Activated CD8-positive, alpha-beta T cell treated with anti-CD3 and anti-CD28 coated beads for 36 hours (primary cell): ENCODE measurements at regions of chr7 and their contacts with region 1.

Region 1: GRCh38 chr7:150898475-150899011 is 46.2 kb downstream of the AOC1 start:
- DNase-seq: peak; percentile 85
- ATAC-seq: peak; percentile 89
- H3K4me3 Mint-ChIP-seq: no peak overlapping the region
- H3K27ac Mint-ChIP-seq: no peak overlapping the region
- H3K4me1 Mint-ChIP-seq: peaks cover 14% of the 10 kb centered on the region
- H3K27me3 Mint-ChIP-seq: peaks cover 58% of the 10 kb centered on the region
- CTCF ChIP-seq: peak; percentile 98

Region 2: DNA sequence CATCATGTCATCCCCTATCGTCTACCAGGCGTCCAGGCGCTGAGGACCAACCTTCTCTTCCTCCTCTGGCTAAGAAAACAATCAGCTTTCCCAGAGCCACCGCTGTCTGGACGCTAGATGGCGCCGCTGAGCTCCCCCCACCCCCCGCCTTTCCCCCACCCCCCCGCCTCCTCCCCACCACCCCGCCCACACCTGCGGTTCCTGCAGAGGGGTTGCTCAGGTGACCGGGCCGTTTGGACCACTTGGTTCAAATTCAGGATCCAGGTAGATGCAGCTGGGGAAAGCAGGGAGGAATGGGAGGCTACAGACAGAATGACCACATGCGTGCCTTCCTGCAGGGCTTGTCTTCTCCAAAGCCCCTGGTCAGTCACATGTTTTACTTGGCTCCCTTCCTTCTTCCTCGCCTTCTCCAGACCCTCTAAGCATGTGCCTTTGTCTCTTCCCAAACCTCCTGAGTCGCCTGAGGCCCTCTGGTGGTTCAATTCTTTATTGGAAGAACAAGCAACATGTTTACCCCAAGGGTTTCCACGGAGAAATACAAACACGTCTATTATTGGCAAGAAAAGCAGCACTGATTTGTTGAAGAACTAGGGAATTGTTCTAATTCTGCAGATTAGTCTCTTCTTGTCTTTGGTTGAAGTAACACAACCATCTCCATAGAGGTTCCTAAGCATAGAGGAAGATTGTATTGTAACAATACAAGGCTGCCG is 21.6 kb before region 1 on chr7:
- CTCF ChIA-PET with region 1: interaction called, 48 read pairs
- POLR2A ChIA-PET with region 1: interaction called, 3 read pairs
- intact Hi-C with region 1: no loop called
- DNase-seq: peak; percentile 41
- ATAC-seq: no peak
- H3K4me3 Mint-ChIP-seq: no peak overlapping the region
- H3K27ac Mint-ChIP-seq: no peak overlapping the region
- H3K4me1 Mint-ChIP-seq: peaks cover 14% of the 10 kb centered on the region
- H3K27me3 Mint-ChIP-seq: peaks cover 3% of the 10 kb centered on the region
- CTCF ChIP-seq: no peak

Region 3: GRCh38 chr7:150923196-150923595 is 24.7 kb after region 1 on chr7:
- CTCF ChIA-PET with region 1: interaction called, 32 read pairs
- POLR2A ChIA-PET with region 1: no interaction called
- intact Hi-C with region 1: no loop called
- DNase-seq: no peak
- ATAC-seq: no peak
- H3K4me3 Mint-ChIP-seq: no peak overlapping the region
- H3K27ac Mint-ChIP-seq: no peak overlapping the region
- H3K4me1 Mint-ChIP-seq: peaks cover 16% of the 10 kb centered on the region
- H3K27me3 Mint-ChIP-seq: peaks cover 16% of the 10 kb centered on the region
- CTCF ChIP-seq: no peak

Region 4: GRCh38 chr7:150974468-150975391 is 76.2 kb after region 1 on chr7:
- CTCF ChIA-PET with region 1: interaction called, 12 read pairs
- POLR2A ChIA-PET with region 1: no interaction called
- intact Hi-C with region 1: no loop called
- DNase-seq: peak; percentile 75
- ATAC-seq: peak; percentile 76
- H3K4me3 Mint-ChIP-seq: peak overlapping the region; percentile 77
- H3K27ac Mint-ChIP-seq: peak overlapping the region; percentile 42
- H3K4me1 Mint-ChIP-seq: peaks cover 28% of the 10 kb centered on the region
- H3K27me3 Mint-ChIP-seq: peaks cover 25% of the 10 kb centered on the region
- CTCF ChIP-seq: peak; percentile 46

Region 5: GRCh38 chr7:151008511-151009323 is 110.2 kb after region 1 on chr7:
- CTCF ChIA-PET with region 1: interaction called, 22 read pairs
- POLR2A ChIA-PET with region 1: no interaction called
- intact Hi-C with region 1: no loop called
- DNase-seq: peak; percentile 83
- ATAC-seq: peak; percentile 53
- H3K4me3 Mint-ChIP-seq: peak overlapping the region; percentile 77
- H3K27ac Mint-ChIP-seq: peak overlapping the region; percentile 86
- H3K4me1 Mint-ChIP-seq: peaks cover 49% of the 10 kb centered on the region
- H3K27me3 Mint-ChIP-seq: no peaks in the 10 kb centered on the region
- CTCF ChIP-seq: peak; percentile 83